ENCODE measurements at regions of chr2 and their contacts with region 1.

Region 1: GRCh38 chr2:237774802-237775553 is 23.6 kb upstream of the RBM44 start:
- DNase-seq: peak; percentile 62
- H3K4me3 Mint-ChIP-seq: no peak overlapping the region
- H3K27ac Mint-ChIP-seq: no peak overlapping the region
- H3K4me1 Mint-ChIP-seq: no peaks in the 10 kb centered on the region
- H3K27me3 Mint-ChIP-seq: no peaks in the 10 kb centered on the region

Region 2: GRCh38 chr2:237315170-237315828 is 459.7 kb before region 1 on chr2:
- CTCF ChIA-PET with region 1: no interaction called
- POLR2A ChIA-PET with region 1: no interaction called
- intact Hi-C with region 1: no loop called
- DNase-seq: no peak
- H3K4me3 Mint-ChIP-seq: no peak overlapping the region
- H3K27ac Mint-ChIP-seq: no peak overlapping the region
- H3K4me1 Mint-ChIP-seq: no peaks in the 10 kb centered on the region
- H3K27me3 Mint-ChIP-seq: peaks cover 7% of the 10 kb centered on the region

Region 3: DNA sequence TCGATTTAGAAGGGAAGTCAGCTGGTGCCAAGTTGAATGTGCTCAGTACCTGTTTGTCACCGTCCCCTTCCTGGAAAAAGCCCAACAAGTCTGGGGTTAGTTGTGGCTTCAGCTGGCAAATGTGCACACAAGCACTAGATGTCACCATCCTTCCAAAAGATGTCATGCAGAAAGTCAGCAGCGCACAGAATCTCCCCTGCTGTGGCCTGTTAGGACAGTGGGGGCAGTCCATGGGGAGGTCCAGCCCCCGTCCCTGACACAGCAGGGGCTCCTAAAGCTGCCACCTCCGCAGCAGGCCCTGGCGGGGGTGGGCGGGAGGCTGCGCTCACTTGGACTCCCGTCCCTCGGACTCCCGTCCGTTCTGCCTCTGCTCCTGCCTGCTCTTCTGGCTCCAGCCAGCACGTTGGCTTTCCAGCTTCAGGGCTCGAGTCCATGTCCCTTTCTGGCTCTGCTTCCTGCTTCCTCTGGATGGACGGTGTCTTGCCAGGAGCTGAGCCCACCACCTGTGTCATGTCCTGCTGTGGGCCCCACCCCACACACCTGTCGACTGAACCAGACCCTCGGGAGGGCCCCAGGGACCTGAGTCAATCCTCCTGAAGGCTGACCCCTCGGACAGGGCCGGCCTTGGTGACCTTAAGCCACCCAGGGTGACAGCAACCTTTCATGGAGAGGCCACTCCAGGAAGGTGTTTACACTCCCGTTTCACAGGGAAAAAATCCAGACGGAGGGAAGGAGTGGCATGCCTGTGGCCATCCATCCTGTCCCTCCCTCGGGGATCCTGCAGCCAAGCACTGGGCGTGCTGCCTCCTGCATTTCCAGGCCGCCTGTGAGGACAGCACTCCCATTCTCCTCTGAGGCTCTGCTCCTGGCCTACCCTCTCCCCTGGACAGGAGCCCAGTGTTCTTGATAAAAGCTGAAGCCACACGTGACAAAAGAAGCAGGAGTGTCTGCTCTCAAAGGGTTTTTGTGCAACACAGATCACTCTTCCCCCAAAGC is 192.9 kb before region 1 on chr2:
- CTCF ChIA-PET with region 1: interaction called, 7 read pairs
- POLR2A ChIA-PET with region 1: interaction called, 3 read pairs
- intact Hi-C with region 1: loop called (anchors 1 kb)
- DNase-seq: peak; percentile 80
- H3K4me3 Mint-ChIP-seq: no peak overlapping the region
- H3K27ac Mint-ChIP-seq: no peak overlapping the region
- H3K4me1 Mint-ChIP-seq: peaks cover 5% of the 10 kb centered on the region
- H3K27me3 Mint-ChIP-seq: no peaks in the 10 kb centered on the region

Region 4: DNA sequence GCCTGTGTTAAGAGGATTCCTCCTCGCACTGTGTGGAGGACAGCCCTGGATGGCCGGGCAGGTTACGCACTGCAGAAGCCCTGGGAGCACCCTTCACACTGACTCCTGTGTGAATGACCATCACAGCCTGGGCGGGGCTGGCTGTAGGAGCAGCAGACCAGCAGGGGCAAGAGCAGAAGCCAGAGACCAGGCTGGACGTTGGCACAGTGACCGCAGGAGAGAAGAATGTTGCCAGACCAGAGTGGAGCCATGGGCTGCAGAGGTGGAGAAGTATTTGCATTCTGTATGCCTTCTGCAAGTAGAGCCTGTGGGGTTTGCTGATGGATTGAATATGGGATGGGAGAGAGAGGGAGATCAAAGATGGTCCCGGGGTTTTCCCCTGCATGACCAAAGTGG is 124.5 kb before region 1 on chr2:
- CTCF ChIA-PET with region 1: no interaction called
- POLR2A ChIA-PET with region 1: no interaction called
- intact Hi-C with region 1: no loop called
- DNase-seq: no peak
- H3K4me3 Mint-ChIP-seq: no peak overlapping the region
- H3K27ac Mint-ChIP-seq: no peak overlapping the region
- H3K4me1 Mint-ChIP-seq: peaks cover 9% of the 10 kb centered on the region
- H3K27me3 Mint-ChIP-seq: peaks cover 19% of the 10 kb centered on the region

Region 5: GRCh38 chr2:237866119-237866621 is 91.2 kb after region 1 on chr2:
- CTCF ChIA-PET with region 1: no interaction called
- POLR2A ChIA-PET with region 1: no interaction called
- intact Hi-C with region 1: no loop called
- DNase-seq: no peak
- H3K4me3 Mint-ChIP-seq: no peak overlapping the region
- H3K27ac Mint-ChIP-seq: no peak overlapping the region
- H3K4me1 Mint-ChIP-seq: peaks cover 12% of the 10 kb centered on the region
- H3K27me3 Mint-ChIP-seq: peaks cover 29% of the 10 kb centered on the region

Region 6: GRCh38 chr2:238449909-238450417 is 675.0 kb after region 1 on chr2:
- CTCF ChIA-PET with region 1: no interaction called
- POLR2A ChIA-PET with region 1: no interaction called
- intact Hi-C with region 1: no loop called
- DNase-seq: no peak
- H3K4me3 Mint-ChIP-seq: no peak overlapping the region
- H3K27ac Mint-ChIP-seq: no peak overlapping the region
- H3K4me1 Mint-ChIP-seq: no peaks in the 10 kb centered on the region
- H3K27me3 Mint-ChIP-seq: no peaks in the 10 kb centered on the region